HepG2 (cell line): ENCODE measurements at regions of chr17 and their contacts with region 1.

Region 1: GRCh38 chr17:68377862-68378770 is 79.2 kb downstream of the WIPI1 start:
- DNase-seq: peak; percentile 95
- ATAC-seq: peak; percentile 80
- H3K4me3 ChIP-seq: peak overlapping the region; percentile 37 to 72 (median 38)
- H3K27ac ChIP-seq: peak overlapping the region; percentile 97
- H3K4me1 ChIP-seq: peaks cover 74% of the 10 kb centered on the region
- H3K27me3 ChIP-seq: no peaks in the 10 kb centered on the region
- CTCF ChIP-seq: peak; percentile 14
- EP300 ChIP-seq: peak; percentile 70 to 87; a peak in 3 of 4 replicates
- POLR2A ChIP-seq: peak; percentile 59 to 87
- RAD21 ChIP-seq: peak; percentile 15

Region 2: GRCh38 chr17:68200689-68201417 is 177.3 kb before region 1 on chr17:
- CTCF ChIA-PET with region 1: no interaction called
- POLR2A ChIA-PET with region 1: no interaction called
- in situ Hi-C with region 1: no loop called
- intact Hi-C with region 1: no loop called
- DNase-seq: peak; percentile 75
- ATAC-seq: peak; percentile 75
- H3K4me3 ChIP-seq: peak overlapping the region; percentile 17 to 69 (median 31); a peak in 5 of 6 replicates
- H3K27ac ChIP-seq: no peak overlapping the region
- H3K4me1 ChIP-seq: peaks cover 37% of the 10 kb centered on the region
- H3K27me3 ChIP-seq: peaks cover 21 to 70% of the 10 kb centered on the region in 2 experiments
- CTCF ChIP-seq: peak; percentile 100
- EP300 ChIP-seq: no peak
- POLR2A ChIP-seq: no peak
- RAD21 ChIP-seq: peak; percentile 90

Region 3: DNA sequence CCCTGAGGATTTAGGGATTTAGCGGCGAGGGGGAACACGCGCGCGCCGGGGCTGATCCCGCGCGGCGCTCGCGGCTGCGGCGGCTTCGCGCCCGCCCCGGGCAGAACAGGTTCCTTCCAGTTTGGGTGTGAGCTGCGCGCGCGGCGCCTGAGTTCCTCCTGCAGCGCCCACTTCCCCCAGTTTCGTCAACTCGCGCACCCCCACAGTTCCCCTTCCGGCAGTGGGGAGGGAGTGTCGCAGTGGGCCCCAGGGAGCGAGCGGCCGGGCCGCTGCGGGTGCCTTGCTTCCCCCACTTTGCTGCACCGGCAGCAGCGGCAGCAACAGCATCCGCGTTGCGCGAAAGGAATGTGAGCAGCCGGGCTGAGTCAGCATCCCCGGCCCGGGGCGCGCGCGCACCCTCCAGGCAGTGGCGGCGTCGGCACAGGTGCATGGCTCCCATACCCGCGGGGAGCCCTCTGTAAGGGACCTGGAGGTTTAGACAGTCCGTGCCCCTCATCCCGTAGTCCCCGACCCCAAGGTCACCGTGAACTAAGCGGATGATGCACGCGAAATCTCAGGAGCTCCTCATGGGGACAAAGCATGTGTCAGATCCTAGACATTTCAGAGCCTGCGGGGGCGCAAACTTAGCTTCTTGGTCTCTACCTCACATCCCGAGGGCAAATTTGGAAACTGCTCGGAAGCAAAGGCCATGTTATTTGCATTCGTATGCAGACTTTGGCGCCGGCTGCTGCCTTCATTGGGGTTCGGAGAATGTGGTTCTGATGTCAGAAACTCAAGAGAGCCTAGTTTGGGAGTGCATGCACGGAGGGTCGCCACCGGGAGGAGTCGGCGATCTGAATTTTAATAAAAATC is 86.0 kb before region 1 on chr17:
- CTCF ChIA-PET with region 1: no interaction called
- POLR2A ChIA-PET with region 1: interaction called, 30 read pairs
- in situ Hi-C with region 1: loop called (anchors 5 kb)
- intact Hi-C with region 1: loop called (anchors 2 kb)
- DNase-seq: peak; percentile 77
- ATAC-seq: peak; percentile 86
- H3K4me3 ChIP-seq: peak overlapping the region; percentile 74 to 80 (median 79)
- H3K27ac ChIP-seq: peak overlapping the region; percentile 72
- H3K4me1 ChIP-seq: peaks cover 57% of the 10 kb centered on the region
- H3K27me3 ChIP-seq: peaks cover 0 to 3% of the 10 kb centered on the region in 2 experiments; a peak in 1 of 5 replicates
- CTCF ChIP-seq: peak; percentile 49
- EP300 ChIP-seq: 0 out of 4 replicates have a peak, but pooled peaks of 1 of the 2 experiments have one; percentile 4
- POLR2A ChIP-seq: peak in 1 of 2 experiments; percentile 34; a peak in 3 of 4 replicates
- RAD21 ChIP-seq: peak; percentile 60

Region 4: GRCh38 chr17:68318103-68318991 is 59.8 kb before region 1 on chr17:
- CTCF ChIA-PET with region 1: no interaction called
- POLR2A ChIA-PET with region 1: interaction called, 3 read pairs
- in situ Hi-C with region 1: no loop called
- intact Hi-C with region 1: loop called (anchors 2 kb)
- DNase-seq: peak; percentile 87
- ATAC-seq: peak; percentile 89
- H3K4me3 ChIP-seq: peak overlapping the region in 2 of 3 experiments; percentile 11 to 54; a peak in 3 of 6 replicates
- H3K27ac ChIP-seq: peak overlapping the region; percentile 53
- H3K4me1 ChIP-seq: peaks cover 68% of the 10 kb centered on the region
- H3K27me3 ChIP-seq: no peaks in the 10 kb centered on the region
- CTCF ChIP-seq: no peak
- EP300 ChIP-seq: peak in 1 of 2 experiments; percentile 75; a peak in 2 of 4 replicates
- POLR2A ChIP-seq: no peak
- RAD21 ChIP-seq: no peak

Region 5: GRCh38 chr17:68391561-68392268 is 13.6 kb after region 1 on chr17:
- CTCF ChIA-PET with region 1: no interaction called
- POLR2A ChIA-PET with region 1: interaction called, 38 read pairs
- in situ Hi-C with region 1: no loop called
- intact Hi-C with region 1: no loop called
- DNase-seq: peak; percentile 84
- ATAC-seq: peak; percentile 73
- H3K4me3 ChIP-seq: peak overlapping the region in 1 of 3 experiments; percentile 2; a peak in 2 of 6 replicates
- H3K27ac ChIP-seq: peak overlapping the region; percentile 73
- H3K4me1 ChIP-seq: peaks cover 89% of the 10 kb centered on the region
- H3K27me3 ChIP-seq: no peaks in the 10 kb centered on the region
- CTCF ChIP-seq: peak; percentile 9; the same call in 1 of the 2 replicates
- EP300 ChIP-seq: peak in 1 of 2 experiments; percentile 86; a peak in 3 of 4 replicates
- POLR2A ChIP-seq: no peak
- RAD21 ChIP-seq: no peak